GM12878 (cell line): ENCODE measurements at regions of chr1 and their contacts with region 1.

Region 1: DNA sequence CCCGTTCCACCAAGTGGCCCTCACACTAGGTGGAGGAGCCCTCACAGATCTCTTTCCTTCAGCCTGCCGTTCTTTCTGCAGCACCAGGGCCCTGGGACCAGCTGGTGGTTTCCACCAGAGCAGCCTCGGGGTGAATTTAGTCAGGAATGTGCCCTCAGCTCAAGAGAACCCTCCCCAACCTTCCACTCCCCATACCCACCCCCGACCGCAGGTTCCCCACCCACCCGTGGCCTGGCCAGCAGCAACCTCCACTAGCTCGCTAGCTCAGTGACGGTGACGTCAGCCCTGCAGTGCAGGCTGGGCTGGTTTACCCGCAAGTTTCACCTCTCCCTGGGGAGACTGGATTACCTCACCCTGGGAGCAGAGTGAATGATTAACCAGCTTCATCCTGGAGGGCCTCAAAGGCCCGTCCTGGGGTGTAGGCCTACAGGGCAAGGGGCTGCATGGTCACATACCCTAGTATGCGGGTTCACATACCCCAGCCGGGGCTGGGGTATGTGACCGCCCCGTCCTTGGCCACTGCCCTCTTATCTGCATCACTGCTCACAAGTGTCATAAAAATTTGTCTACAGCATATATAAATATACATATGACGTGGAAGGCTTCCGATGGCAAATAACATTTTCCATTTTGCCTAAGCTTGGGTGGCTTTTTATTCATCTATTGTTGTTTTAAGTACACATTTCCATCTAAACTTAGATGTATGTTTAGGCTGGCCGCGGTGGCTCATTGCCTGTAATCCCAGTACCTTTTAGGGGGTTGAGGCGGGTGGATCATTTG is 24.5 kb downstream of the ELF3 start:
- DNase-seq: peak; percentile 35
- ATAC-seq: peak; percentile 89
- H3K4me3 ChIP-seq: no peak overlapping the region
- H3K27ac ChIP-seq: no peak overlapping the region
- H3K4me1 ChIP-seq: peaks cover 13% of the 10 kb centered on the region
- H3K27me3 ChIP-seq: no peaks in the 10 kb centered on the region
- CTCF ChIP-seq: no peak
- EP300 ChIP-seq: 0 out of 4 replicates have a peak, but pooled peaks of 1 of the 2 experiments have one; percentile 41
- POLR2A ChIP-seq: no peak
- RAD21 ChIP-seq: no peak

Region 2: GRCh38 chr1:201709564-201710295 is 325.1 kb before region 1 on chr1:
- CTCF ChIA-PET with region 1: no interaction called
- POLR2A ChIA-PET with region 1: no interaction called
- RAD21 ChIA-PET with region 1: no interaction called
- SMC1A ChIA-PET with region 1: no interaction called
- in situ Hi-C with region 1: no loop called
- intact Hi-C with region 1: no loop called
- DNase-seq: no peak
- ATAC-seq: peak; percentile 99
- H3K4me3 ChIP-seq: no peak overlapping the region
- H3K27ac ChIP-seq: no peak overlapping the region
- H3K4me1 ChIP-seq: peaks cover 4% of the 10 kb centered on the region; the same call in 1 of the 2 replicates
- H3K27me3 ChIP-seq: no peaks in the 10 kb centered on the region
- CTCF ChIP-seq: peak; percentile 80 to 97 (median 85)
- EP300 ChIP-seq: no peak
- POLR2A ChIP-seq: no peak
- RAD21 ChIP-seq: peak; percentile 79

Region 3: GRCh38 chr1:202016022-202016810 is 18.7 kb before region 1 on chr1:
- CTCF ChIA-PET with region 1: interaction called, 3 read pairs
- POLR2A ChIA-PET with region 1: interaction called, 12 read pairs
- RAD21 ChIA-PET with region 1: interaction called, 14 read pairs
- SMC1A ChIA-PET with region 1: interaction called, 12 read pairs
- in situ Hi-C with region 1: no loop called
- intact Hi-C with region 1: no loop called
- DNase-seq: no peak
- ATAC-seq: no peak
- H3K4me3 ChIP-seq: no peak overlapping the region
- H3K27ac ChIP-seq: no peak overlapping the region
- H3K4me1 ChIP-seq: no peaks in the 10 kb centered on the region
- H3K27me3 ChIP-seq: no peaks in the 10 kb centered on the region
- CTCF ChIP-seq: no peak
- EP300 ChIP-seq: no peak
- POLR2A ChIP-seq: no peak
- RAD21 ChIP-seq: no peak

Region 4: DNA sequence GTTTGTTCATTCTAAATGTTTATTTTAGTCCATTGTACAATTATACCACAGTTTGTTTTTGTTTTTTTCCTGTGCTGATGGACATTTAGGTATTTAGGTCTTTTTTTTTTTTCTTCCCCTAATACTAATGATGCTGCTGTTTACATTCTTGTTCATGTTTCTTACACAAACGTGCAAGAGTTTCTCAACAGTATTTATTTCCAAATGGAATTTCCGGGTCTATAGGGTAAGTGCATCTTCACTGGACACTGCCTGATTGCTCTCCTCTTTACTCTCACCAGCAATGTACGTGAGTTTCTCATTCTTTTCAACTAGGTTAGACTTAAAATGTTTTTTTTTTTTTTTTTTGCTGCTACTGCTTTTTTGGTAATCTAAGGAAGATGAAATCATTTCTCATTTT is 436.4 kb after region 1 on chr1:
- CTCF ChIA-PET with region 1: no interaction called
- POLR2A ChIA-PET with region 1: no interaction called
- RAD21 ChIA-PET with region 1: no interaction called
- SMC1A ChIA-PET with region 1: no interaction called
- in situ Hi-C with region 1: no loop called
- intact Hi-C with region 1: no loop called
- DNase-seq: no peak
- ATAC-seq: no peak
- H3K4me3 ChIP-seq: no peak overlapping the region
- H3K27ac ChIP-seq: no peak overlapping the region
- H3K4me1 ChIP-seq: no peaks in the 10 kb centered on the region
- H3K27me3 ChIP-seq: no peaks in the 10 kb centered on the region
- CTCF ChIP-seq: no peak
- EP300 ChIP-seq: no peak
- POLR2A ChIP-seq: no peak
- RAD21 ChIP-seq: no peak